Naive thymus-derived CD4-positive, alpha-beta T cell (primary cell): ENCODE measurements at regions of chr6 and their contacts with region 1.

Region 1: GRCh38 chr6:25556516-25556915 is 95.5 kb upstream of the SCGN start:
- DNase-seq: peak; percentile 14 to 72 (median 55)
- ATAC-seq: peak; percentile 71
- H3K4me3 ChIP-seq: no peak overlapping the region
- H3K4me3 Mint-ChIP-seq: no peak overlapping the region
- H3K27ac ChIP-seq: no peak overlapping the region
- H3K27ac Mint-ChIP-seq: no peak overlapping the region
- H3K4me1 ChIP-seq: no peaks in the 10 kb centered on the region
- H3K4me1 Mint-ChIP-seq: peaks cover 0 to 6% (median 3%) of the 10 kb centered on the region in 7 donors
- H3K27me3 ChIP-seq: no peaks in the 10 kb centered on the region
- H3K27me3 Mint-ChIP-seq: peaks cover 0 to 6% (median 0%) of the 10 kb centered on the region in 5 donors

Region 2: GRCh38 chr6:25263657-25264056 is 292.9 kb before region 1 on chr6:
- CTCF ChIA-PET with region 1: interaction called, 16 read pairs
- POLR2A ChIA-PET with region 1: interaction called, 3 read pairs
- intact Hi-C with region 1: loop called (anchors 1 to 2 kb)
- DNase-seq: no peak
- ATAC-seq: no peak
- H3K4me3 ChIP-seq: no peak overlapping the region
- H3K4me3 Mint-ChIP-seq: no peak overlapping the region
- H3K27ac ChIP-seq: no peak overlapping the region
- H3K27ac Mint-ChIP-seq: no peak overlapping the region
- H3K4me1 ChIP-seq: no peaks in the 10 kb centered on the region
- H3K4me1 Mint-ChIP-seq: peaks cover 0 to 4% (median 3%) of the 10 kb centered on the region in 7 donors
- H3K27me3 ChIP-seq: no peaks in the 10 kb centered on the region
- H3K27me3 Mint-ChIP-seq: peaks cover 0 to 25% (median 3%) of the 10 kb centered on the region in 5 donors

Region 3: GRCh38 chr6:25278914-25279747 is 277.4 kb before region 1 on chr6 and contains the start of gene CARMIL1:
- CTCF ChIA-PET with region 1: interaction called, 7 read pairs
- POLR2A ChIA-PET with region 1: no interaction called
- intact Hi-C with region 1: loop called in 1 of 2 experiments (anchors 1 kb)
- DNase-seq: peak; percentile 46 to 76 (median 70)
- ATAC-seq: peak; percentile 84
- H3K4me3 ChIP-seq: peak within 1 kb of the TSS; percentile 64
- H3K4me3 Mint-ChIP-seq: peak within 1 kb of the TSS; percentile 88 to 98 (median 94)
- H3K27ac ChIP-seq: peak within 1 kb of the TSS; percentile 77
- H3K27ac Mint-ChIP-seq: peak within 1 kb of the TSS; percentile 74 to 94 (median 90)
- H3K4me1 ChIP-seq: peaks cover 14 to 15% of the 10 kb centered on the region in 2 donors
- H3K4me1 Mint-ChIP-seq: peaks cover 19 to 62% (median 41%) of the 10 kb centered on the region in 7 donors
- H3K27me3 ChIP-seq: no peaks in the 10 kb centered on the region
- H3K27me3 Mint-ChIP-seq: peaks cover 0 to 16% (median 6%) of the 10 kb centered on the region in 5 donors
- total RNA-seq, gene CARMIL1: 3.3 to 12.8 (median 10.4) TPM

Region 4: DNA sequence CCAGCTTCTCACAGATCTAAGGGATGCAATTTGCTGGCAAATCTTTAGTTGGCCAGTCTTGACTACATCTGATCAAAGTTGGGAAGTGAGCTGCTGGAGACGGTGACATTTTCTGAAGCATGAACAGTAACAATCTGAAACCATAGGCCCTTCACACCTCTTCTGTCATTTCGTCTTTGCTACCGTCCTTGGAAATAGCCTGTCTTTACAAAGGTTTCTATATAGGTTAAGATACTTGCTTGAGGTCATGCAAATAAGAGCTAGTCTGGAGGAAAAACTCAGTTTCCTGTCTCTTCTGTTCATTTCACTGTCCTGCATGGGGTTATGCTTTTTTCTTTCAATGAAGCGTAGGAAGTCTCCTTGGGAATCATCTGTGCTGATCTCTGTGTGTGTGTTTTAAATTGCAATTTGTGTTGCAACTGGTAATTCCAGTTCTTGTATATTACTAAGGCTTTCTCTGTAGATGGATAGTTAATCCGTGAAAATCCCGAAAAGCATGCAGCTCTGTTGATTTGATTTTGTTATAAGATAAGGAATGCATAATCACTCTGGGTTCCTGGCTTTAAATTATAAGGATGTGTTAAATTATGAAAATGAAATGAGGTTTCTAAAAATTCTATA is 221.6 kb before region 1 on chr6:
- CTCF ChIA-PET with region 1: no interaction called
- POLR2A ChIA-PET with region 1: no interaction called
- intact Hi-C with region 1: loop called in 1 of 2 experiments (anchors 5 kb)
- DNase-seq: no peak
- ATAC-seq: no peak
- H3K4me3 ChIP-seq: no peak overlapping the region
- H3K4me3 Mint-ChIP-seq: no peak overlapping the region
- H3K27ac ChIP-seq: no peak overlapping the region
- H3K27ac Mint-ChIP-seq: no peak overlapping the region
- H3K4me1 ChIP-seq: peaks cover 0 to 9% of the 10 kb centered on the region in 2 donors
- H3K4me1 Mint-ChIP-seq: peaks cover 0 to 75% (median 50%) of the 10 kb centered on the region in 7 donors
- H3K27me3 ChIP-seq: no peaks in the 10 kb centered on the region
- H3K27me3 Mint-ChIP-seq: peaks cover 0 to 6% (median 0%) of the 10 kb centered on the region in 5 donors

Region 5: GRCh38 chr6:25601800-25602673 is 45.5 kb after region 1 on chr6:
- CTCF ChIA-PET with region 1: interaction called, 4 read pairs
- POLR2A ChIA-PET with region 1: no interaction called
- intact Hi-C with region 1: loop called (anchors 1 to 2 kb)
- DNase-seq: peak in 6 of 9 donors; percentile 3 to 48 (median 35)
- ATAC-seq: peak; percentile 64
- H3K4me3 ChIP-seq: no peak overlapping the region
- H3K4me3 Mint-ChIP-seq: no peak overlapping the region
- H3K27ac ChIP-seq: no peak overlapping the region
- H3K27ac Mint-ChIP-seq: peak overlapping the region in 2 of 9 donors; percentile 17 to 18
- H3K4me1 ChIP-seq: no peaks in the 10 kb centered on the region
- H3K4me1 Mint-ChIP-seq: peaks cover 0 to 19% (median 9%) of the 10 kb centered on the region in 7 donors
- H3K27me3 ChIP-seq: no peaks in the 10 kb centered on the region
- H3K27me3 Mint-ChIP-seq: no peaks in the 10 kb centered on the region

Region 6: DNA sequence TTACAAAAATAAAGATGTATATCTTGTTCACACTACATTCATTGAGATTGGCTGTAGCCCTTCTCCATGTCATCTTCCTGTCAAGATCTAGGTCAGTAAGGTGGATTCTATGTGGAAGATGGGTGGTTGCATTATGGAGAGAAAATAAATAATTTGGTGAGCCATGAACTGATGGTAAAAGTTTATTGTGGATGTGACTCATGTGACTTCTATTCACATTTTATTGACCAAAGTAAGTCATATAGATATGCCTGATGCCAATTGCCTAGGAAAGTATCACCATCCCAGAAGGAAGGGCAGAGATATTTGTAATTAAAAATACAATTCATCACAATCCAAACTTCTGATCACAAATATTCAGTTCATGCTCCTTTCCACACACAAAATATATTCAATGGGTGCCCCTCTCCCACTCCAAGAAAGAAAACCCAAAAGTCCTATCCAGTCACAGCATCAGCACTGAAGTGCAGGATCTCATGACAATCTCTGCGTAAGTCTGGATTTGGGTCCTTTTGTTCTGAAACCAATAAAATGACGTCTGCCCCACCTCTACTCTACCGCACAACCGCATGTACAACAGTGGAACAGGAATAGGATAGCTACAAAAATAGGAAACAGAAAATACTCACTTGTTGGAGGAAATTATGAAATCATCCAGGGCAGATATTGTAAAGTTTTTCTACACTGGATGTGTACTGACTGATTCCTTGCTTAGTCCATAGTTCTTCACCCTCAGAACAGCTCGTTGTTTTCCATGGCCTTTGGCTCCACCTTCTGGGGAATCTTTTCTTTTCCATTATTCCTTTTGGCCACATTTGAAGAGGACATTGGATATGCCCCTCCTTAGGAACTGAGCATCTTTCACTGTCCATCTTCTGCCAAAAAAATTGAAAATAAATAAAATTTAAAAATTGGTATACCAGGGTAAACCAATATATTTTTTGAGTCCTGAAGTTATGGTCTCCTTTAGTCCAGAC is 333.6 kb after region 1 on chr6:
- CTCF ChIA-PET with region 1: no interaction called
- POLR2A ChIA-PET with region 1: no interaction called
- intact Hi-C with region 1: loop called in 1 of 2 experiments (anchors 1 kb)
- DNase-seq: peak in 3 of 9 donors; percentile 7 to 14 (median 11)
- ATAC-seq: peak; percentile 44
- H3K4me3 ChIP-seq: no peak overlapping the region
- H3K4me3 Mint-ChIP-seq: no peak overlapping the region
- H3K27ac ChIP-seq: no peak overlapping the region
- H3K27ac Mint-ChIP-seq: peak overlapping the region in 1 of 9 donors; percentile 58
- H3K4me1 ChIP-seq: no peaks in the 10 kb centered on the region
- H3K4me1 Mint-ChIP-seq: peaks cover 0 to 1% (median 0%) of the 10 kb centered on the region in 7 donors
- H3K27me3 ChIP-seq: no peaks in the 10 kb centered on the region
- H3K27me3 Mint-ChIP-seq: peaks cover 0 to 14% (median 3%) of the 10 kb centered on the region in 5 donors